ENCODE measurements at regions of chr5 and their contacts with region 1.

Region 1: DNA sequence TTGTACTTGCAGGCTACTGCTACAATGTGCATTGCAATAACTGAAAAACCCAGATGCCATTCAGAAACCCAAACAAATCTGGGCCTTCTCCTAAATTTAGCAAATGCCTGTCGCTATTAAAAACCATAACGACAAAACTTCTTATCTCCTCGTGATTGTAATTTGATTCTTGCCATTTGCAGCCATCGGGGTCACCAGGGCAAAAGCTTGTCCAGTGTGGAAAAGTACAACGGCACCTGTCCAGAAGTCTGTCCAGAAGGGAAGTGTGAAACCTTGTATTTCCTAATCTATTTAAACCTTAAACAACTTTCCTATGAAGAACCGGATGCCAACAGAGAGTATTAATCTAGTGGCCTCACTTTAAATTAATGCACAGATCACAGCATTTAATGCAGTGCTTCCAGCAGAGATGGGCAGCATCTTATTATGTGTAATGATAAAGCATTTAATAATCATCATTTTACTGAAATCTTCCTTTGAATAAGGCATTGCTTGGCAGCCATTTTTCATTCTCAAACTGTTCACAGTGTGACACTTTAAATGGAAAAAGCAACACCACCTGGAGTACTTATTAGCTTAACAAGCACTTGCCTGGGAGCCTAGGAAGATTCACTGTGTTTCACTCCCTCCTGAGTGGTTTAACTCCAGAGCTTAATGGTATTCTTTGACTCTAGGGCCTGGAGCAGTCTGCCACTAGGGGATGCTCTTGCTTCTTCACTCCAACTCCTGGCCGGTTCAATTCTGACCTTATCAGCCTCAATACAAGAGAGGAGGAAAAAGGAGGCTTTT is 4.9 kb upstream of the C7 start:
- DNase-seq: peak; percentile 67
- H3K4me3 ChIP-seq: peak overlapping the region in 1 of 2 experiments; percentile 43; a peak in 1 of 4 replicates
- H3K27ac ChIP-seq: peak overlapping the region in 1 of 2 experiments; percentile 86; a peak in 2 of 4 replicates
- H3K4me1 ChIP-seq: peaks cover 0 to 13% of the 10 kb centered on the region in 2 experiments; a peak in 2 of 4 replicates
- H3K27me3 ChIP-seq: no peaks in the 10 kb centered on the region
- CTCF ChIP-seq: peak; percentile 87
- EP300 ChIP-seq: peak in 1 of 2 experiments; percentile 37; a peak in 1 of 4 replicates
- RAD21 ChIP-seq: peak; percentile 98

Region 2: DNA sequence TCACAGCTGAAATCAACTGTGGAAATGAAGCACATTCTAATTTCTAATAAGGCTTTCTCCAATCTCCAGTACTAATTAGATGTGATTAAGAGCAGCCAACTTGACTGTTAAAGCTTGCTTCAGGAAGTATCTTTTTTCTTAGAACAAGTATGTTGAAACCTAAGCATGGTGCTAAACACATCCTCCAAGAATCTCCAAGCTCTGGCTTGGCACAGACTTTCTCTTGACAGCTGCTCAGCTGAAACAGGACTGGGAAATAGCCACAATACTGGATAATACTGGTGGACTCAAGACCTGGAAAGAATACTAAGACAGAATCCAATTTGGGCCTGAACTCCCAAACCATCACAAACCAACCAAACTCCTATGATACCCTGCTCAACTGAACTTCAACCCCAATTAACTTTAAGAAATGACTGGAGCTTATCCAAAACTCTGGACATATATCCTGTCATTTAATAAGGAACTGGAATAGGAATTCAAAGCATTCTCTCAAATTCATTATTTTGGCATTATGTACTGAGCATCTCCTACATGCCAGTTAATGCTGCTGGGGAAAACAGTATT is 122.5 kb before region 1 on chr5:
- CTCF ChIA-PET with region 1: no interaction called
- POLR2A ChIA-PET with region 1: no interaction called
- DNase-seq: no peak
- H3K4me3 ChIP-seq: no peak overlapping the region
- H3K27ac ChIP-seq: no peak overlapping the region
- H3K4me1 ChIP-seq: peaks cover 0 to 7% of the 10 kb centered on the region in 2 experiments; a peak in 1 of 4 replicates
- H3K27me3 ChIP-seq: no peaks in the 10 kb centered on the region
- CTCF ChIP-seq: no peak
- EP300 ChIP-seq: no peak
- RAD21 ChIP-seq: no peak

Region 3: DNA sequence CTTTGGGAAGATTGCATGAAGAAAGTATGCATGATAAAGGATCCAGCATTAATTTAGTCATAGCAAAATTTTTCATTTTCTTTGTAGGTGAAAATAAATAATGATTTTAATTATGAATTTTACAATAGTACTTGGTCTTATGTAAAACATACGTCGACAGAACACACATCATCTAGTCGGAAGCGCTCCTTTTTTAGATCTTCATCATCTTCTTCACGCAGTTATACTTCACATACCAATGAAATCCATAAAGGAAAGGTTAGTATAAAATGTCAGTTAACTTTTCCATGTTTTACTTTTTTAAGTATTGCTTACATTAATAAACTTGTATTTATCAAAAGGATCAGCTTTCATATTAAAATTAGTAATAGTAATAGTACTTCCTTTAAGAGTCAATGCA is 40.7 kb after region 1 on chr5:
- CTCF ChIA-PET with region 1: interaction called, 10 read pairs
- POLR2A ChIA-PET with region 1: no interaction called
- DNase-seq: no peak
- H3K4me3 ChIP-seq: no peak overlapping the region
- H3K27ac ChIP-seq: no peak overlapping the region
- H3K4me1 ChIP-seq: no peaks in the 10 kb centered on the region
- H3K27me3 ChIP-seq: no peaks in the 10 kb centered on the region
- CTCF ChIP-seq: no peak
- EP300 ChIP-seq: no peak
- RAD21 ChIP-seq: no peak

Region 4: GRCh38 chr5:41270423-41271251 is 366.2 kb after region 1 on chr5:
- CTCF ChIA-PET with region 1: interaction called, 25 read pairs
- POLR2A ChIA-PET with region 1: interaction called, 3 read pairs
- DNase-seq: peak; percentile 18
- H3K4me3 ChIP-seq: no peak overlapping the region; a peak in 1 of 4 replicates
- H3K27ac ChIP-seq: peak overlapping the region in 1 of 2 experiments; percentile 43; a peak in 2 of 4 replicates
- H3K4me1 ChIP-seq: peaks cover 0 to 5% of the 10 kb centered on the region in 2 experiments; a peak in 3 of 4 replicates
- H3K27me3 ChIP-seq: no peaks in the 10 kb centered on the region
- CTCF ChIP-seq: peak; percentile 91
- EP300 ChIP-seq: no peak
- RAD21 ChIP-seq: peak; percentile 94

Region 5: GRCh38 chr5:41346609-41347008 is 442.2 kb after region 1 on chr5:
- CTCF ChIA-PET with region 1: interaction called, 16 read pairs
- POLR2A ChIA-PET with region 1: no interaction called
- DNase-seq: no peak
- H3K4me3 ChIP-seq: no peak overlapping the region
- H3K27ac ChIP-seq: peak overlapping the region in 1 of 2 experiments; percentile 91; a peak in 1 of 4 replicates
- H3K4me1 ChIP-seq: peaks cover 0 to 2% of the 10 kb centered on the region in 2 experiments; a peak in 3 of 4 replicates
- H3K27me3 ChIP-seq: no peaks in the 10 kb centered on the region
- CTCF ChIP-seq: no peak
- EP300 ChIP-seq: no peak
- RAD21 ChIP-seq: peak; percentile 50; the same call in 1 of the 2 replicates

Region 6: DNA sequence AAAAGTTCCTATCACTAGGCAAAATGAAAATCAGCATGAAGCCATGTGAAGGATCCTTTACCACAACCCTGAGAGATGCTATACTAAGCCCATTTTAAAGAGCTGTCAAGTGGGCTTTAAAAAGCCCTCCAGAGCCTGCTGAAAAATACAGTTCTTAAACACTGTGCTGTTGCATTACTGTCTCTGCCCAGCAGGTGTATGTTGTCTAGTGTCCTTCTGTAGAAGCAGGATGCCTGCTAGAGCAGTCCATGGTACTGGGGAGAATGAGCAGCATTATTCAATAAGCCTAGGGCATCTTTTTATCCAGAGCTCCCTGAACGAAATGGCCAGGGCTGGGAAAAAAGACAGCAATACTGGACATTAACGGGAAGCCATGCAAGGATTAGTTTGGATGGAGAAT is 732.2 kb after region 1 on chr5:
- CTCF ChIA-PET with region 1: interaction called, 21 read pairs
- POLR2A ChIA-PET with region 1: no interaction called
- DNase-seq: peak; percentile 21
- H3K4me3 ChIP-seq: no peak overlapping the region
- H3K27ac ChIP-seq: no peak overlapping the region
- H3K4me1 ChIP-seq: peaks cover 0 to 2% of the 10 kb centered on the region in 2 experiments; a peak in 1 of 4 replicates
- H3K27me3 ChIP-seq: no peaks in the 10 kb centered on the region
- CTCF ChIP-seq: peak; percentile 50
- EP300 ChIP-seq: no peak
- RAD21 ChIP-seq: peak; percentile 26; the same call in 1 of the 2 replicates

Region 7: DNA sequence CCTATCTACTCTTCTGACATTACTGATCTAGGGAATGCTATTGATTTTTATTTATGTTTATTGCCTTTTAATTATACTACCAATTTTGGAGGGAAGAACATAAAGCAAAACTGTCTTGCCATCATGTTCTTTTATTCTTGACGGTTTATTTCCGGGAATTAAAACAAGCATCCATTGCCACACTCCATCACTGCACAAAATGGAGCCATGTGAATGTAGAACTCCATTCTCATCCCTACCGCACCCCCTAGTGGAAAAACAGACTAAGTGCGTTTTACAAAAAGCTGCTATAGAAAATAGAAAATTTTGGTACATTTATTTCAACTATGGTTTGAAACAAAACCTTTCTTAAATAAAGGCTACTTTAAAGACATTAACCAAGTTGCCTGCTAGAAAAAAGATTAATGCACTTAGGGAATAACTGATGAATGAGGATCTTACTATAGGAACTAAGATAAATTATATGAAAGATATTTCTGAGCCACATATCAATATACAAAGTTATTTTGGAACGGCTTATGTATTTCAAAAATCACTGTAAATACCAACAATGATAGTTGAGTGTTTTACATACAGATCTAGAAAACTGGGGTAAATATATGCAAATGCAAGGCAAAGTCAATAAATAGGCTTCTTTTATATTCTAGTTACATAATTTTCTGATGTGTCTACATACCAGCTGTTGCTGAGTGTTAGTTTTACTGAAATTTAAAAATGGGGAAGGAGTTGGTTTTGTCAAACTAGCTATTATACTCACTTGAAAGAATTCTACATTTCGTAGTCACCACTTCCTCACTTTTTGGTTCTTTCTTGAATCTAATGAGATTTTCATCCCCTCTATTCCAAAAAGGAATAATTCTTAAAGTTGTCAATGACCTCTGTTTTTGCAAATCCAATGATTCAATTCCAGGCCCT is 939.3 kb after region 1 on chr5:
- CTCF ChIA-PET with region 1: interaction called, 44 read pairs
- POLR2A ChIA-PET with region 1: no interaction called
- DNase-seq: peak; percentile 35
- H3K4me3 ChIP-seq: no peak overlapping the region; a peak in 1 of 4 replicates
- H3K27ac ChIP-seq: no peak overlapping the region
- H3K4me1 ChIP-seq: no peaks in the 10 kb centered on the region; a peak in 1 of 4 replicates
- H3K27me3 ChIP-seq: no peaks in the 10 kb centered on the region
- CTCF ChIP-seq: peak; percentile 93
- EP300 ChIP-seq: no peak
- RAD21 ChIP-seq: peak; percentile 100